ENCODE measurements at regions of chr6 and their contacts with region 1.

Region 1: GRCh38 chr6:27893059-27893835 is 18.9 kb downstream of the OR2B2 start:
- DNase-seq: peak; percentile 95 to 96
- H3K4me3 ChIP-seq: peak overlapping the region; percentile 82
- H3K4me3 Mint-ChIP-seq: no peak overlapping the region
- H3K27ac Mint-ChIP-seq: no peak overlapping the region
- H3K4me1 ChIP-seq: peaks cover 21% of the 10 kb centered on the region
- H3K4me1 Mint-ChIP-seq: peaks cover 39% of the 10 kb centered on the region
- H3K27me3 ChIP-seq: no peaks in the 10 kb centered on the region
- H3K27me3 Mint-ChIP-seq: peaks cover 10% of the 10 kb centered on the region
- CTCF ChIP-seq: no peak

Region 2: DNA sequence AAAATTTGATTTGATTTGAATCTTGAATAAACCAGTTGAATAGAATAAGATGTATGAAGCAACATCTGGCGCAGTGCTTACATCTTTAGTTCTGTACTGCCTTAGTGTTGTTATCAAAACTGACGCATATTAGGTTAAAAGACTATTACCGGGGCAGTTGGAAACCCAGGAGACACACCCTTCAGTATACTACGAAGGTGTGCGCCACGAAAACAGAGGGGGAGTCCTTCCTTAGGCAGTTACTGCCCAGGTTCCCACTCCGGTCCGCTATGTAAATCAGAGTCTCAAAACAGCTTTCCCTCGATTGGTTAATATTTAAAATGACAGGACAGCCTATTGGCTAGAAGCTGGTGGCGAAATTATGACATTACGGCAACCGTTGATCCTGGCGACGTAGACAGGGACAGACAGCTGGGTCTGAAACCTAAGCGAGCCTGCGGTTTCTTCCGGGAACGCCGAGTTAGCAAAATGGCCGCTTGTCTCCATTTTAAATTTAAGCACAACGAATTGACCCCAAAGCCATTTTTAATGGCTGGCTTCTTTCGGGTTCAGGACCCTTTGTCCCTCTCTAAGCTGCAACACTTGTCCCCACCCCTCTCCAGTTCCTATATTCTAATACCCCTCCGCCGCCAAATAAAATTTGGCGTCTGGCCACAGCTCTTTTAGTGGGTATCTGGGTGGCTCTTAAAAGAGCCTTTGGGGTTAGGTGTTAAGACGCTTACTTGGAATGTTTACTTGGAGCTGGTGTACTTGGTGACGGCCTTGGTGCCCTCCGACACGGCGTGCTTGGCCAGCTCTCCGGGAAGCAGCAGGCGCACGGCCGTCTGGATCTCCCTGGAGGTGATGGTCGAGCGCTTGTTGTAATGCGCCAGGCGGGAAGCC is 1770.2 kb before region 1 on chr6:
- CTCF ChIA-PET with region 1: no interaction called
- POLR2A ChIA-PET with region 1: interaction called, 9 read pairs
- intact Hi-C with region 1: loop called (anchors 5 kb)
- DNase-seq: peak; percentile 96 to 98
- H3K4me3 ChIP-seq: peak overlapping the region; percentile 44
- H3K4me3 Mint-ChIP-seq: peak overlapping the region; percentile 90
- H3K27ac Mint-ChIP-seq: peak overlapping the region; percentile 99
- H3K4me1 ChIP-seq: peaks cover 23% of the 10 kb centered on the region
- H3K4me1 Mint-ChIP-seq: peaks cover 36% of the 10 kb centered on the region
- H3K27me3 ChIP-seq: no peaks in the 10 kb centered on the region
- H3K27me3 Mint-ChIP-seq: no peaks in the 10 kb centered on the region
- CTCF ChIP-seq: no peak

Region 3: DNA sequence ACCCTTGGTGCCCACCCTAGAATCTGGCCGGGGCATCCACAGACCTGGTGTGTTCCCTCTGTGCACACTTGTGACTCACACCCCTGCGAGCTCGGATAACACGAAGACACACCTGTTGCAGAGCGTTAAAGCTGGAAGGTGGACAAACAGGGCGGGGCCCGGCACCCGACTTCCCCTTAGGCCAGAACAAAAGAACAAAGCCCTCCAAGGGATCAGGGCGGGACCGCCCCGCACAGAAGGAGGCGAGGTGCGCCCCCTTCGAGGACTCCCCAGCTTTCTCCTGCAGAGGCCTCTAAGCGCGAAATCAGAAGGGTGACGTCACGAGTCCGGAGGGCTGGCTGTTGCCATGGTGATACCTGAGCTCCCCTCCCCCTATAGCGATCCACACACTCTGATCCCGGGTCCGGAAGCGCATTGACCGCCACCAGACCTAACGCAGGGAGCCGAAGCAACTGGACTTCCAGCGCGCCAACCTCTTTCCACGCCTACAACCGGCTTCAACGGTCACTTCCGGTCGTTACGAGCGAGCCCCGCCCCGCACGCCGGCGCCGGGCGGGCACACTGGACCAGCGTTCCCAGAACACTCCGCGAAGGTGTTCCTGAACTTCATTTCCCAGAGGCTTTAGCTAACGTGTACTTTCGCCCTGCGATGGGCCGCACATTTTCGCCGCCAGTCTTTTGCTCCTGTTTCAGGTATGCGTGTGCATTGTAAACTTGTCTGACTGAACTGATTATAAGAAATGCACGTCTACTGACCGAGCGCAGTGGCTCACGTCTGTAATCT is 420.4 kb before region 1 on chr6 and contains the start of gene ZNF184:
- CTCF ChIA-PET with region 1: no interaction called
- POLR2A ChIA-PET with region 1: interaction called, 9 read pairs
- intact Hi-C with region 1: loop called (anchors 10 kb)
- DNase-seq: peak; percentile 97 to 98
- H3K4me3 ChIP-seq: peak within 1 kb of the TSS; percentile 69
- H3K4me3 Mint-ChIP-seq: peak within 1 kb of the TSS; percentile 96
- H3K27ac Mint-ChIP-seq: peak within 1 kb of the TSS; percentile 95
- H3K4me1 ChIP-seq: peaks cover 3% of the 10 kb centered on the region; the same call in 1 of the 2 replicates
- H3K4me1 Mint-ChIP-seq: peaks cover 6% of the 10 kb centered on the region
- H3K27me3 ChIP-seq: no peaks in the 10 kb centered on the region
- H3K27me3 Mint-ChIP-seq: no peaks in the 10 kb centered on the region
- CTCF ChIP-seq: peak in 1 of 2 experiments; percentile 18
- total RNA-seq, gene ZNF184: 3.9 and 4.4 TPM in 2 replicates

Region 4: GRCh38 chr6:27650620-27651370 is 242.5 kb before region 1 on chr6:
- CTCF ChIA-PET with region 1: no interaction called
- POLR2A ChIA-PET with region 1: no interaction called
- intact Hi-C with region 1: no loop called
- DNase-seq: peak; percentile 81
- H3K4me3 ChIP-seq: peak overlapping the region; percentile 34
- H3K4me3 Mint-ChIP-seq: peak overlapping the region; percentile 78
- H3K27ac Mint-ChIP-seq: peak overlapping the region; percentile 84
- H3K4me1 ChIP-seq: no peaks in the 10 kb centered on the region
- H3K4me1 Mint-ChIP-seq: peaks cover 8% of the 10 kb centered on the region
- H3K27me3 ChIP-seq: no peaks in the 10 kb centered on the region; the same call in 1 of the 2 replicates
- H3K27me3 Mint-ChIP-seq: no peaks in the 10 kb centered on the region
- CTCF ChIP-seq: peak; percentile 43 to 49

Region 5: GRCh38 chr6:27825025-27825793 is 68.0 kb before region 1 on chr6:
- CTCF ChIA-PET with region 1: no interaction called
- POLR2A ChIA-PET with region 1: interaction called, 57 read pairs
- intact Hi-C with region 1: no loop called
- DNase-seq: no peak
- H3K4me3 ChIP-seq: peak overlapping the region; percentile 78
- H3K4me3 Mint-ChIP-seq: peak overlapping the region; percentile 89
- H3K27ac Mint-ChIP-seq: peak overlapping the region; percentile 97
- H3K4me1 ChIP-seq: peaks cover 11% of the 10 kb centered on the region; the same call in 1 of the 2 replicates
- H3K4me1 Mint-ChIP-seq: peaks cover 21% of the 10 kb centered on the region
- H3K27me3 ChIP-seq: no peaks in the 10 kb centered on the region
- H3K27me3 Mint-ChIP-seq: peaks cover 4% of the 10 kb centered on the region
- CTCF ChIP-seq: no peak

Region 6: GRCh38 chr6:27864906-27865849 is 28.1 kb before region 1 on chr6:
- CTCF ChIA-PET with region 1: interaction called, 8 read pairs
- POLR2A ChIA-PET with region 1: interaction called, 620 read pairs
- intact Hi-C with region 1: loop called (anchors 1 kb)
- DNase-seq: peak; percentile 85 to 89
- H3K4me3 ChIP-seq: peak overlapping the region; percentile 49
- H3K4me3 Mint-ChIP-seq: peak overlapping the region; percentile 76
- H3K27ac Mint-ChIP-seq: peak overlapping the region; percentile 99
- H3K4me1 ChIP-seq: 0 out of 2 replicates have a peak, but pooled peaks cover 4% of the 10 kb centered on the region
- H3K4me1 Mint-ChIP-seq: peaks cover 12% of the 10 kb centered on the region
- H3K27me3 ChIP-seq: no peaks in the 10 kb centered on the region
- H3K27me3 Mint-ChIP-seq: peaks cover 9% of the 10 kb centered on the region
- CTCF ChIP-seq: no peak

Region 7: DNA sequence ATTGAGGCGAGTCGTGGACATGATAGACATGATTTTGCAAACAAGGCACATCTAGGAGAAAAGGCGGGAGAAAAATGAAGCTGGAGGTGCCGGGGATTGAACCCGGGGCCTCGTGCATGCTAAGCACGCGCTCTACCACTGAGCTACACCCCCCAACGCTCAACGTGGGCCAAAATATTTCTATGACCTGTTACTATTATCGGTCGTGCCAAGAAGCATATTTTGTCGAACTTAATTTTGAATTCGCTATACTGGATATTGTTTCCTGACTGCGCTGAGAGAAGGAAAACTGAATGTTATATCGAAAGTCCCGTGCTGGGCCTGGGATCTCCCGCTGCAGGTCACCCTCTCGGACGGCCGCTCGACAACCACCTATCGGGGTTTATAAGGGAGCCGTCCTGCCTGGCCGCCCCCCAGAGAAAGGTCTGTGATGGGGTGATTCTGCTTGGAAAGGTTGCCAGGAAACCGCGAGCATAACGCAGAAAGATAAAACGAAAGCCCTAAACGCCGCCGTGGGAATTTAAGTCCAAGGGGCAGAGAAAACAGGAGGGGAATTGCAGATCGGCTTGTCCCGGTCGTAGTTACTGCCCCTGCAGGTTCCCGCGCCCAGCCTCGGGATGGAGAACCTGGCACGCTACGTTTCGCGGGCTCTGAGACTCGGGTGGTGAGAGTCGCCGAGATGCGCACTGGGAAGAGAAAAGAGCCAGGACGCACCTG is 970.5 kb after region 1 on chr6:
- CTCF ChIA-PET with region 1: no interaction called
- POLR2A ChIA-PET with region 1: interaction called, 5 read pairs
- intact Hi-C with region 1: loop called (anchors 10 kb)
- DNase-seq: peak; percentile 85 to 87
- H3K4me3 ChIP-seq: peak overlapping the region; percentile 81
- H3K4me3 Mint-ChIP-seq: peak overlapping the region; percentile 79
- H3K27ac Mint-ChIP-seq: peak overlapping the region; percentile 96
- H3K4me1 ChIP-seq: peaks cover 11% of the 10 kb centered on the region
- H3K4me1 Mint-ChIP-seq: peaks cover 20% of the 10 kb centered on the region
- H3K27me3 ChIP-seq: no peaks in the 10 kb centered on the region
- H3K27me3 Mint-ChIP-seq: no peaks in the 10 kb centered on the region
- CTCF ChIP-seq: no peak